ENCODE measurements at regions of chr1 and their contacts with region 1.

Region 1: DNA sequence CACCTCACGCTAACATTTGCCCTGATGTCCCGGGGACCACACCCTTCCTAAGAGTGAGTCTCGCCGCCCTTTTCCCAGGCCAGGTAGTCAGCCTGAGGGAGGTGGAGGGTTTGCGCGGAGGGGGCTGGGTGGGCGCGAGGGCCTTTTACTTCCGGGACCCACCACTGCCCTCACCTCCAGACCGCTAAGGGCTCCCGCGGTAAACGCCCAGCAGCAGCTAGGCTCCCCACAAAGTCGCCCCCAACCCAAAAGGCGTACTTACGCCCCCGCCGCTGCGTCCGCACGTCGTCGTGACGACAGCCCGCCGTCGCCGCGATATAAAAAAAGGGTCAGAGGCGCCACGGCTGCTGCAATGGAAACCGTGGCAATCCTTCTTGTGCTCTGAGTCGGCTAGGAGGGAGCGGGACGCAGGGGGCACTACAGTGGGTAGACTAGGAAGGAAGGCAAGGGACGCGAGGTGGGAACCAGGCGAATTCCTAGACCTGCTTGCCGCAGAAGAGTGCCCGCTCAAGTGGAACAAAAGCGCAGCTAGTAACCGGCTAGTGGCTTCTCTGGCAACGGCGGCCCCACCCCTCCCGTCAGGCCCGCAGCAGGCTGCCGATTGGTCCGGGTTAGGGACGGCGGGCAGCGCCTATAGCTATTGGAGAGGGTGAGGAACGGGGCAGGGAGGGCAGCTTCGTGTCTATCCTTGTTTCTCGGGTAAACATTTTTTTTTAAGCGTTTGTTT is at the start of gene ODF2L:
- DNase-seq: peak; percentile 90
- ATAC-seq: peak; percentile 99
- H3K4me3 ChIP-seq: peak within 1 kb of the TSS; percentile 83 to 98 (median 87)
- H3K4me3 Mint-ChIP-seq: peak within 1 kb of the TSS; percentile 99
- H3K27ac ChIP-seq: peak within 1 kb of the TSS; percentile 82 to 90
- H3K27ac Mint-ChIP-seq: peak within 1 kb of the TSS; percentile 97
- H3K4me1 ChIP-seq: peaks cover 12 to 15% of the 10 kb centered on the region in 2 donors
- H3K4me1 Mint-ChIP-seq: peaks cover 36% of the 10 kb centered on the region
- H3K27me3 ChIP-seq: no peaks in the 10 kb centered on the region
- H3K27me3 Mint-ChIP-seq: no peaks in the 10 kb centered on the region
- CTCF ChIP-seq: no peak
- total RNA-seq, gene ODF2L: 61.3 and 65.9 TPM in 2 replicates

Region 2: GRCh38 chr1:86419277-86419903 is 23.5 kb after region 1 on chr1:
- CTCF ChIA-PET with region 1: interaction called, 3 read pairs
- POLR2A ChIA-PET with region 1: no interaction called
- intact Hi-C with region 1: loop called (anchors 2 kb)
- DNase-seq: peak; percentile 69
- ATAC-seq: peak; percentile 92
- H3K4me3 ChIP-seq: peak overlapping the region in 3 of 5 experiments; percentile 16 to 42 (median 41)
- H3K4me3 Mint-ChIP-seq: peak overlapping the region; percentile 74
- H3K27ac ChIP-seq: no peak overlapping the region
- H3K27ac Mint-ChIP-seq: peak overlapping the region; percentile 43
- H3K4me1 ChIP-seq: peaks cover 0 to 3% of the 10 kb centered on the region in 2 donors
- H3K4me1 Mint-ChIP-seq: peaks cover 4% of the 10 kb centered on the region
- H3K27me3 ChIP-seq: no peaks in the 10 kb centered on the region
- H3K27me3 Mint-ChIP-seq: no peaks in the 10 kb centered on the region
- CTCF ChIP-seq: peak; percentile 80

Region 3: GRCh38 chr1:86596741-86597290 is 200.9 kb after region 1 on chr1:
- CTCF ChIA-PET with region 1: no interaction called
- POLR2A ChIA-PET with region 1: no interaction called
- intact Hi-C with region 1: no loop called
- DNase-seq: no peak
- ATAC-seq: no peak
- H3K4me3 ChIP-seq: no peak overlapping the region
- H3K4me3 Mint-ChIP-seq: no peak overlapping the region
- H3K27ac ChIP-seq: no peak overlapping the region
- H3K27ac Mint-ChIP-seq: no peak overlapping the region
- H3K4me1 ChIP-seq: no peaks in the 10 kb centered on the region
- H3K4me1 Mint-ChIP-seq: no peaks in the 10 kb centered on the region
- H3K27me3 ChIP-seq: no peaks in the 10 kb centered on the region
- H3K27me3 Mint-ChIP-seq: peaks cover 1% of the 10 kb centered on the region
- CTCF ChIP-seq: no peak

Region 4: GRCh38 chr1:86704458-86704971 is 308.6 kb after region 1 on chr1 and contains the start of gene SH3GLB1:
- CTCF ChIA-PET with region 1: interaction called, 13 read pairs
- POLR2A ChIA-PET with region 1: interaction called, 12 read pairs
- intact Hi-C with region 1: loop called (anchors 1 kb)
- DNase-seq: peak; percentile 97
- ATAC-seq: peak; percentile 85
- H3K4me3 ChIP-seq: peak within 1 kb of the TSS; percentile 79 to 90 (median 82)
- H3K4me3 Mint-ChIP-seq: peak within 1 kb of the TSS; percentile 98
- H3K27ac ChIP-seq: peak within 1 kb of the TSS; percentile 78 to 93
- H3K27ac Mint-ChIP-seq: peak within 1 kb of the TSS; percentile 100
- H3K4me1 ChIP-seq: peaks cover 24 to 30% of the 10 kb centered on the region in 2 donors
- H3K4me1 Mint-ChIP-seq: peaks cover 44% of the 10 kb centered on the region
- H3K27me3 ChIP-seq: no peaks in the 10 kb centered on the region
- H3K27me3 Mint-ChIP-seq: no peaks in the 10 kb centered on the region
- CTCF ChIP-seq: peak; percentile 91
- total RNA-seq, gene SH3GLB1: 55.3 and 57.3 TPM in 2 replicates

Region 5: DNA sequence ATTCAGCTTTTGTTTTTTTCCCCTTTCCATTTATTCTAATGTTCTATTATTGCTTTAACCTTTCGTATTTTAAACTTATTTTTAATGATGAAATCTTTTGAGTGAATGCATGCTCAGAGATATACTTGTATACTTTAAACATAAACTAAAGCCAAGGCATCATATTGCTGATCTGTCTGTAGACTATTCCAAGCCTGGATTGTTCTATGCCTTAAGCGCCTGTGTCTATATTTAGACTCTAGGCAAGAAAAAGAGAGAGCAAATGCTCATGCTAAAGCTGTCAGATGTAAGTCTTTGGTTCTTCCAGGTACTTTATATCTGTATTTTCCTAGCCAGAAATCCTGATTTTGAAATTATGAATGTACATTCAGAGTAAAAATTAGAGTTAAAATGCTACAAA is 322.9 kb after region 1 on chr1:
- CTCF ChIA-PET with region 1: no interaction called
- POLR2A ChIA-PET with region 1: no interaction called
- intact Hi-C with region 1: no loop called
- DNase-seq: no peak
- ATAC-seq: no peak
- H3K4me3 ChIP-seq: no peak overlapping the region
- H3K4me3 Mint-ChIP-seq: no peak overlapping the region
- H3K27ac ChIP-seq: no peak overlapping the region
- H3K27ac Mint-ChIP-seq: no peak overlapping the region
- H3K4me1 ChIP-seq: no peaks in the 10 kb centered on the region
- H3K4me1 Mint-ChIP-seq: peaks cover 19% of the 10 kb centered on the region
- H3K27me3 ChIP-seq: no peaks in the 10 kb centered on the region
- H3K27me3 Mint-ChIP-seq: no peaks in the 10 kb centered on the region
- CTCF ChIP-seq: no peak

Region 6: GRCh38 chr1:87061742-87062156 is 665.8 kb after region 1 on chr1:
- CTCF ChIA-PET with region 1: no interaction called
- POLR2A ChIA-PET with region 1: no interaction called
- intact Hi-C with region 1: loop called (anchors 10 kb)
- DNase-seq: peak; percentile 57
- ATAC-seq: peak; percentile 35
- H3K4me3 ChIP-seq: no peak overlapping the region
- H3K4me3 Mint-ChIP-seq: peak overlapping the region; percentile 68
- H3K27ac ChIP-seq: peak overlapping the region; percentile 59 to 73
- H3K27ac Mint-ChIP-seq: peak overlapping the region; percentile 79
- H3K4me1 ChIP-seq: peaks cover 49 to 81% of the 10 kb centered on the region in 2 donors
- H3K4me1 Mint-ChIP-seq: peaks cover 80% of the 10 kb centered on the region
- H3K27me3 ChIP-seq: no peaks in the 10 kb centered on the region
- H3K27me3 Mint-ChIP-seq: no peaks in the 10 kb centered on the region
- CTCF ChIP-seq: no peak